ENCODE measurements at regions of chr11 and their contacts with region 1.

Region 1: GRCh38 chr11:6812390-6813005 is 13.0 kb upstream of the OR6A2 start:
- DNase-seq: peak; percentile 34
- ATAC-seq: peak; percentile 96
- H3K4me3 ChIP-seq: no peak overlapping the region
- H3K27ac ChIP-seq: no peak overlapping the region
- H3K4me1 ChIP-seq: no peaks in the 10 kb centered on the region
- H3K27me3 ChIP-seq: no peaks in the 10 kb centered on the region; the same call in 1 of the 2 replicates
- CTCF ChIP-seq: peak; percentile 71
- POLR2A ChIP-seq: no peak
- RAD21 ChIP-seq: peak; percentile 71

Region 2: DNA sequence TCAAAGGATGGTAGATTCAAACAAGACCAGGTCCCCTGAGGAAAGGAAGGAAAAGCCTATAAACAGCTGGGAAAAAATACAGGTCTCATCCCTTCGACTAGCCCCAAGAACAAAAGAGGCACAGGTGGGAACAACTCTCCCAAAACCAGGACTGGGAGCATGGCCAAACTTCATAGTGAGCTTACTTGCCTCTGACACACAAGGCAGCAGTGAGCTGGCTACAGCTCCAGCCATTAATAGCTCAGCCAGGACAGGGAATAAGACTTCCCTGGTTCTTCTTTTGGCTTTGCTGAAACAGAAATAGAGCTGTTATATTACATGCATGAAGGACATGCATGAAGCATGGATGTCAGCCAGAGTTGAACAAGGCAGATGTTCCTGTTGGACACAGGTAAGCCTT is 50.5 kb after region 1 on chr11 and contains the start of gene OR10A2:
- CTCF ChIA-PET with region 1: no interaction called
- POLR2A ChIA-PET with region 1: no interaction called
- dilution Hi-C with region 1: no loop called
- in situ Hi-C with region 1: no loop called
- intact Hi-C with region 1: no loop called
- DNase-seq: peak; percentile 10
- ATAC-seq: no peak
- H3K4me3 ChIP-seq: no peak within 1 kb of the TSS
- H3K27ac ChIP-seq: no peak within 1 kb of the TSS
- H3K4me1 ChIP-seq: no peaks in the 10 kb centered on the region
- H3K27me3 ChIP-seq: no peaks in the 10 kb centered on the region
- CTCF ChIP-seq: no peak
- POLR2A ChIP-seq: no peak
- RAD21 ChIP-seq: no peak
- total RNA-seq, gene OR10A2: not detected in 2 replicates

Region 3: GRCh38 chr11:7278314-7278917 is 465.9 kb after region 1 on chr11:
- CTCF ChIA-PET with region 1: interaction called, 4 read pairs
- POLR2A ChIA-PET with region 1: no interaction called
- dilution Hi-C with region 1: no loop called
- in situ Hi-C with region 1: no loop called
- intact Hi-C with region 1: loop called (anchors 2 kb)
- DNase-seq: peak; percentile 34
- ATAC-seq: peak; percentile 76
- H3K4me3 ChIP-seq: no peak overlapping the region
- H3K27ac ChIP-seq: no peak overlapping the region
- H3K4me1 ChIP-seq: no peaks in the 10 kb centered on the region
- H3K27me3 ChIP-seq: no peaks in the 10 kb centered on the region
- CTCF ChIP-seq: peak; percentile 56
- POLR2A ChIP-seq: no peak
- RAD21 ChIP-seq: peak; percentile 48

Region 4: GRCh38 chr11:7442588-7443215 is 630.2 kb after region 1 on chr11:
- CTCF ChIA-PET with region 1: interaction called, 3 read pairs
- POLR2A ChIA-PET with region 1: no interaction called
- dilution Hi-C with region 1: no loop called
- in situ Hi-C with region 1: loop called (anchors 25 kb)
- intact Hi-C with region 1: loop called (anchors 5 kb)
- DNase-seq: peak; percentile 31
- ATAC-seq: peak; percentile 96
- H3K4me3 ChIP-seq: no peak overlapping the region
- H3K27ac ChIP-seq: no peak overlapping the region
- H3K4me1 ChIP-seq: no peaks in the 10 kb centered on the region
- H3K27me3 ChIP-seq: no peaks in the 10 kb centered on the region; the same call in 1 of the 2 replicates
- CTCF ChIP-seq: peak; percentile 71
- POLR2A ChIP-seq: no peak
- RAD21 ChIP-seq: peak; percentile 69

Measured in IMR-90 (cell line).